Caco-2 (cell line): ENCODE measurements at regions of chr1 and their contacts with region 1.

Region 1: GRCh38 chr1:206808615-206809014 is 36.3 kb upstream of the IL10 start:
- DNase-seq: peak; percentile 46 to 57
- H3K4me3 ChIP-seq: no peak overlapping the region
- H3K4me3 Mint-ChIP-seq: no peak overlapping the region
- H3K27ac Mint-ChIP-seq: no peak overlapping the region
- H3K4me1 ChIP-seq: no peaks in the 10 kb centered on the region
- H3K4me1 Mint-ChIP-seq: no peaks in the 10 kb centered on the region
- H3K27me3 ChIP-seq: no peaks in the 10 kb centered on the region
- H3K27me3 Mint-ChIP-seq: no peaks in the 10 kb centered on the region
- CTCF ChIP-seq: peak; percentile 48 to 59

Region 2: GRCh38 chr1:206723812-206724472 is 84.7 kb before region 1 on chr1:
- CTCF ChIA-PET with region 1: no interaction called
- POLR2A ChIA-PET with region 1: no interaction called
- intact Hi-C with region 1: loop called (anchors 2 kb)
- DNase-seq: peak in 1 of 2 experiments; percentile 66
- H3K4me3 ChIP-seq: no peak overlapping the region
- H3K4me3 Mint-ChIP-seq: peak overlapping the region; percentile 6
- H3K27ac Mint-ChIP-seq: peak overlapping the region; percentile 59
- H3K4me1 ChIP-seq: peaks cover 21% of the 10 kb centered on the region
- H3K4me1 Mint-ChIP-seq: peaks cover 31% of the 10 kb centered on the region
- H3K27me3 ChIP-seq: no peaks in the 10 kb centered on the region
- H3K27me3 Mint-ChIP-seq: no peaks in the 10 kb centered on the region
- CTCF ChIP-seq: no peak

Region 3: GRCh38 chr1:206842854-206843253 is 34.2 kb after region 1 on chr1:
- CTCF ChIA-PET with region 1: no interaction called
- POLR2A ChIA-PET with region 1: no interaction called
- intact Hi-C with region 1: no loop called
- DNase-seq: no peak
- H3K4me3 ChIP-seq: no peak overlapping the region
- H3K4me3 Mint-ChIP-seq: no peak overlapping the region
- H3K27ac Mint-ChIP-seq: no peak overlapping the region
- H3K4me1 ChIP-seq: peaks cover 7% of the 10 kb centered on the region
- H3K4me1 Mint-ChIP-seq: no peaks in the 10 kb centered on the region
- H3K27me3 ChIP-seq: 0 out of 2 replicates have a peak, but pooled peaks cover 1% of the 10 kb centered on the region
- H3K27me3 Mint-ChIP-seq: peaks cover under 1% of the 10 kb centered on the region
- CTCF ChIP-seq: no peak

Region 4: GRCh38 chr1:207025144-207025880 is 216.7 kb after region 1 on chr1:
- CTCF ChIA-PET with region 1: no interaction called
- POLR2A ChIA-PET with region 1: no interaction called
- intact Hi-C with region 1: no loop called
- DNase-seq: no peak
- H3K4me3 ChIP-seq: no peak overlapping the region
- H3K4me3 Mint-ChIP-seq: peak overlapping the region; percentile 30
- H3K27ac Mint-ChIP-seq: peak overlapping the region; percentile 90
- H3K4me1 ChIP-seq: peaks cover 85% of the 10 kb centered on the region
- H3K4me1 Mint-ChIP-seq: peaks cover 53% of the 10 kb centered on the region
- H3K27me3 ChIP-seq: no peaks in the 10 kb centered on the region
- H3K27me3 Mint-ChIP-seq: no peaks in the 10 kb centered on the region
- CTCF ChIP-seq: no peak